ENCODE measurements at regions of chrX and their contacts with region 1.

Region 1: GRCh38 chrX:9656277-9656676 is 109.4 kb downstream of the GPR143 start:
- DNase-seq: peak; percentile 16 to 30
- ATAC-seq: peak; percentile 51 to 96 (median 80)
- H3K4me3 ChIP-seq: no peak overlapping the region
- H3K27ac ChIP-seq: no peak overlapping the region
- H3K4me1 ChIP-seq: peaks cover 0 to 12% (median 0%) of the 10 kb centered on the region in 9 donors
- H3K27me3 ChIP-seq: no peaks in the 10 kb centered on the region
- CTCF ChIP-seq: no peak

Region 2: GRCh38 chrX:9530848-9531274 is 125.4 kb before region 1 on chrX:
- intact Hi-C with region 1: loop called in 1 of 10 experiments (anchors 10 kb)
- DNase-seq: peak; percentile 63 to 72
- ATAC-seq: peak; percentile 65 to 95 (median 92)
- H3K4me3 ChIP-seq: no peak overlapping the region
- H3K27ac ChIP-seq: no peak overlapping the region
- H3K4me1 ChIP-seq: peaks cover 0 to 34% (median 19%) of the 10 kb centered on the region in 9 donors
- H3K27me3 ChIP-seq: peaks cover 0 to 37% (median 0%) of the 10 kb centered on the region in 7 donors
- CTCF ChIP-seq: no peak

Region 3: DNA sequence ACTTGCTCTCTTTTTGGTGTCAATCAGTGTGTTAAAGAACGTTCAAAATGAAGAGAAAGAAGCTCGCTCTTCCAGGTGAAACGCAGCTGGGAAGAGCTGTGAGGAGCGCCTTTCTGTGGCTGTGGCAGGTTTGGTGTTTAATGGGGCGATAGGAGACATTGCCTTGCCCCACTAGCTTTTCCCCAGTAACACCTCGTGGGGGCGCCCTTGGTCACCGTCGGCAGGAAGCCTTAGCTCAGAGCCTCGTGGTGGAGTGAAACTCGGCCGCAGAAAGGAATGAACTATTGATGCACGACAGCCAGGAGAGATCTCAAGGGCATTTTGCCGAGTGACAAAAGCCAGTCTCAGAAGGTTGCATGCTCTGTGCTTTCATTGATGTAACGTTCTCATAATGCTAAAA is 44.3 kb after region 1 on chrX:
- intact Hi-C with region 1: no loop called
- DNase-seq: no peak
- ATAC-seq: no peak
- H3K4me3 ChIP-seq: no peak overlapping the region
- H3K27ac ChIP-seq: no peak overlapping the region
- H3K4me1 ChIP-seq: no peaks in the 10 kb centered on the region
- H3K27me3 ChIP-seq: no peaks in the 10 kb centered on the region
- CTCF ChIP-seq: no peak